ENCODE measurements at regions of chr1 and their contacts with region 1.

Region 1: GRCh38 chr1:198681831-198682759 is 43.3 kb downstream of the PTPRC start:
- DNase-seq: peak; percentile 91
- H3K4me3 ChIP-seq: peak overlapping the region; percentile 23
- H3K27ac ChIP-seq: peak overlapping the region; percentile 73
- H3K4me1 ChIP-seq: peaks cover 22% of the 10 kb centered on the region
- H3K27me3 ChIP-seq: no peaks in the 10 kb centered on the region
- CTCF ChIP-seq: no peak

Region 2: DNA sequence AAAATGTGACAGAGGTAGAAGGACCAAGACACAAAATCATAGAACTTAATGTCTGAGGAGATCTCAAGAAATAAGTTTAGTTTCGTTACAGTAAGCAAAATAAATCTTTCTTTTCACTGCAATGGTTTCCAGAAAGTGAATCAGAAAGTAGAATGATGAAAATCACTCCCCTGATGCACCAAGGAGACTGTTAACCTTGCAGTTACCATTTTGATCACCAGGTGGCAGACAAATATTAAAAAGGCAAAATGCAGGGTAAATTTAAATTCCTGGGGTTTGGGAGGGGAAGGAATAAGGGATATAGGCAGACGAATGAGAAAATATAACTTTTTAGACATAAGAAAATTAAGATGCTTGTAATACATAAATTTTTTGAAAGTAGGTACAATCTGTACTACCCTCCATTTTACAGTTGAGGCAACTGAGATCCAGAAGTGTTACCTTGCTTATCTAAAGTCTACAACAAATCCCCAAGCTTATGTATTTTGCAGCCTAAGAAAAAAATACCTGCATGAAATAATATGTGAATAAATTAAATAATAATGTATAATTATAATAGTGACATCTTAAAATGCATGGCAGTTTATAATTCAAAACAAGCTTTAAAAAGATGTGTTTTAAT is 1160.9 kb before region 1 on chr1:
- CTCF ChIA-PET with region 1: interaction called, 4 read pairs
- POLR2A ChIA-PET with region 1: no interaction called
- intact Hi-C with region 1: loop called (anchors 2 kb)
- DNase-seq: peak; percentile 68
- H3K4me3 ChIP-seq: no peak overlapping the region
- H3K27ac ChIP-seq: no peak overlapping the region
- H3K4me1 ChIP-seq: no peaks in the 10 kb centered on the region
- H3K27me3 ChIP-seq: no peaks in the 10 kb centered on the region
- CTCF ChIP-seq: peak; percentile 78

Region 3: DNA sequence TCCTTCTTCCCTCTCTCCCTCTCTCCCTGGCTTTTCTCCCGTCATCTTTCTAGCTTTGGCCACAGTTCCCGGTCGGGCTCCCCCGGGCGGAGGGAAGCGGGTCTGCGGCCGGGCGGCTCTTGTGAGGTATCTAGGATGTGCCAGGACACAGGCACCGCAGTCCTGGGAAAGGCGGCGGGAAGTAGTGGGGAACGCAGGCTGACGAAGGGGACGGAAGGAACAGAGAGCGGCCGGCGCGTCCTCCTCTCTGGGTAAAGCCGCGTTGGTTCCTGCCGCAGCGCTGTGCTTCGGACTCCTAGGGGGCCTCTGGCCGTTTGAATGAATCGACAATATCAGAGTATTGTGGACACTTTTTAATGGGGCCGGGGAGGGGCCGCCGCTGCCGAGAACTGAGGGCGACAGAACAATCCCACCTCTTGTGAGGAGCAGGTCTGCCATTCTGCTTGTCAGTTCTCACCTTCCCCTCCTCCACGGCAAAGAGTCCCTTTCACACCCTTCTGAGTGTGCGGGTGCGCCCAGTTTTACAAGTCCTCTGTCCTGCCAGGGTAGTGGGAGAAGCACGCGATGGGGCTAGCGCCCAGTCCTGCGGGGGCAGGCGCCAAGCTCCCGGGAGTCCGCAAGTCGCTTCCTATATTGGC is 766.1 kb before region 1 on chr1:
- CTCF ChIA-PET with region 1: no interaction called
- POLR2A ChIA-PET with region 1: no interaction called
- intact Hi-C with region 1: loop called (anchors 5 kb)
- DNase-seq: peak; percentile 68
- H3K4me3 ChIP-seq: peak overlapping the region; percentile 34
- H3K27ac ChIP-seq: no peak overlapping the region
- H3K4me1 ChIP-seq: peaks cover 32% of the 10 kb centered on the region
- H3K27me3 ChIP-seq: peaks cover 99% of the 10 kb centered on the region
- CTCF ChIP-seq: peak; percentile 61

Region 4: GRCh38 chr1:198157241-198157846 is 524.8 kb before region 1 on chr1:
- CTCF ChIA-PET with region 1: no interaction called
- POLR2A ChIA-PET with region 1: no interaction called
- intact Hi-C with region 1: loop called (anchors 5 kb)
- DNase-seq: peak; percentile 97
- H3K4me3 ChIP-seq: peak overlapping the region; percentile 92
- H3K27ac ChIP-seq: peak overlapping the region; percentile 74
- H3K4me1 ChIP-seq: peaks cover 35% of the 10 kb centered on the region
- H3K27me3 ChIP-seq: no peaks in the 10 kb centered on the region
- CTCF ChIP-seq: no peak

Region 5: DNA sequence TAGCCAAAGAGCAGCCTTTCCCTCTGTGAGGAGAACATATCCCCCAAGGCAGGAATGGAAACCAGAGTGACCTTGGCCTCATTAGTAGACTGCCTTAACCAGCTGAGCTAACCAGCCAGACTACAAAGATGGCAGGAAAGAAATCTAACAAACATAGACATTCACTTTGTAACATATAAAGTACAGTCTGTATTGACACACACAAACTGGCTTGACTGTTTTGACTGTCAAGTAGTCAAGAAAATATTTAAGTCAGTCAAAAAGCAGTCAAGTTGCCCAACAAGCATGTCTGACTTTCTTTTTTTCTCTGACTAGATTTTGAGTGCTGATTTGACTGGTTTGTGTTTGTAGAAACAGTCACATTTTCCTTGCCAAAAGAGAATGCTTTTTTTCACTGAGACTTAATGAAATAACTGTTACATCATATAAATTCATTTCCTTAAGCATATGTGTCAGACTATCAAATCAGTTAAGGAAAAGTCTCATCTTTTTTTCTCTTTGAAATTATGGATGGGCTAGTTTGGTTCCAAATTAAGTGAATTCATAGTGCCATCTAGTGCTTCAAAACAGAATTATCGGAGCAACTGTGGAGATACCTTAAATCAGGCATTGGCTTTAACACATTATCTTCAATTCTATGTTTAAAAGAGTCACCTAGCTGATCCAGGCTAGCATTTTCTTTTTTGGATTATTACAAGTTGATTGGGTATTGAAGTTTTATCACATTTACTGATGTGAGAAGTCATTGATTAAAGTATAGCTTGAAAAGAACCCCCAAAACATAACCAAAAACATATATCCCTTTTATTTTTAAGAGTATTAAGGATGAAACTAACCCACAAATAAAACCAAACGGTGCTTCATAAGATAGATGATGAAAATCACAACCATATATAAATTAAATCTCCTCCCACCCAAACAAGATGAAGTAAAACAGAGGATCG is 216.6 kb before region 1 on chr1:
- CTCF ChIA-PET with region 1: interaction called, 3 read pairs
- POLR2A ChIA-PET with region 1: no interaction called
- intact Hi-C with region 1: loop called (anchors 5 kb)
- DNase-seq: peak; percentile 61
- H3K4me3 ChIP-seq: no peak overlapping the region
- H3K27ac ChIP-seq: no peak overlapping the region
- H3K4me1 ChIP-seq: no peaks in the 10 kb centered on the region
- H3K27me3 ChIP-seq: no peaks in the 10 kb centered on the region
- CTCF ChIP-seq: peak; percentile 74

Region 6: DNA sequence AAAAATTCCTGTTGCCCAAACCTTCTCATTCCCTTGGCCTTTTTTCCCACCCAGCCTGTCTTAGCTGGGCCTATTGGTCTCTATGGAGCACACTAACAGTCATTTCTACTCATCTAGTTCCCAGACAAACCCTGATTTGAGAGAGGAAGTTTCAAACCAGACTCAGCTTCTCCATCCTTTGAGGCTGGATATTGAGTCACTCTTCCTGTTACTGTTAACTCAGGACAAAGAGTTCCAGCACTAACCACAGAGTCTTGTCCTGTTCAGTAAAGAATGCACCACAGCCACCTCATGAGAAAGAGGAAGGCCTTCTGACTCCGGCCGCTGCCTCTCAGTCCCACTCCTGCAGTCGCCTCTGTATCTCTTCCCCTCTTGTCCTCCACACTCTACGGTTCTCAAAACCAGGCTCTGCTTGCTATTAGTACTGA is 94.5 kb after region 1 on chr1:
- CTCF ChIA-PET with region 1: no interaction called
- POLR2A ChIA-PET with region 1: no interaction called
- intact Hi-C with region 1: no loop called
- DNase-seq: no peak
- H3K4me3 ChIP-seq: no peak overlapping the region
- H3K27ac ChIP-seq: no peak overlapping the region
- H3K4me1 ChIP-seq: peaks cover 17% of the 10 kb centered on the region
- H3K27me3 ChIP-seq: no peaks in the 10 kb centered on the region
- CTCF ChIP-seq: no peak

Region 7: DNA sequence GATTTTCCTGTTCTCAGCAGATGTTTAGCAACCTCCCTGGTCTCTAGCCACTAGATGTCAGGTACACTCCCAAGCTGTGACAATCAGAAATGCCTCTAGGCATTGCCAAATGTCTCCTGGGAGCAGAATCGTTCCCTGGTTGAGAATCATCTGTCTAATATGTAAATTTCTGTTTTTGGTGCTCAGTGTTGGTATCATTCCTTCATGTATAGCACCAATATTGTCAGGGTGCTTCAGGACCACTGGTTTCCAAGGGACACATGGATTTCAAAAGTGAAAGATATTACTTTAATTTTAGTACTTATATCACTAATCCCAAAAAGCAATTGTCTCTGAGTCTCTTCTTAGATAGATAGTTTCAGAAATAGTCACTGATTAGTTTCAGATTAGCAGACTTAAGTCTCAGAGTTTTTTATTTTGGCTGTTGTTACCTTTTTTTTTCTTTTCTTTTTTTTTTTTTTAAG is 116.9 kb after region 1 on chr1:
- CTCF ChIA-PET with region 1: no interaction called
- POLR2A ChIA-PET with region 1: no interaction called
- intact Hi-C with region 1: no loop called
- DNase-seq: peak; percentile 33
- H3K4me3 ChIP-seq: no peak overlapping the region
- H3K27ac ChIP-seq: no peak overlapping the region
- H3K4me1 ChIP-seq: no peaks in the 10 kb centered on the region
- H3K27me3 ChIP-seq: no peaks in the 10 kb centered on the region
- CTCF ChIP-seq: peak; percentile 20; the same call in 1 of the 2 replicates

Measured in A673 (cell line).